ENCODE measurements at regions of chr20 and their contacts with region 1.

Region 1: GRCh38 chr20:38355151-38356012 is 9.1 kb downstream of the LBP start:
- DNase-seq: no peak
- H3K4me3 ChIP-seq: no peak overlapping the region
- H3K27ac ChIP-seq: no peak overlapping the region
- H3K4me1 ChIP-seq: peaks cover 5% of the 10 kb centered on the region
- H3K27me3 ChIP-seq: no peaks in the 10 kb centered on the region
- CTCF ChIP-seq: no peak

Region 2: GRCh38 chr20:38338849-38339520 is 16.4 kb before region 1 on chr20:
- CTCF ChIA-PET with region 1: no interaction called
- dilution Hi-C with region 1: no loop called
- in situ Hi-C with region 1: no loop called
- intact Hi-C with region 1: loop called (anchors 1 kb)
- DNase-seq: peak; percentile 34
- H3K4me3 ChIP-seq: no peak overlapping the region
- H3K27ac ChIP-seq: no peak overlapping the region
- H3K4me1 ChIP-seq: no peaks in the 10 kb centered on the region
- H3K27me3 ChIP-seq: no peaks in the 10 kb centered on the region
- CTCF ChIP-seq: peak; percentile 25 to 64